CD4-positive, alpha-beta memory T cell (primary cell): ENCODE measurements at regions of chr6 and their contacts with region 1.

Region 1: GRCh38 chr6:41318654-41319565 is 16.5 kb upstream of the NCR2 start:
- DNase-seq: peak; percentile 76 to 82 (median 81)
- H3K4me3 ChIP-seq: peak overlapping the region in 1 of 2 donors; percentile 8
- H3K4me3 Mint-ChIP-seq: peak overlapping the region in 7 of 8 donors; percentile 12 to 72 (median 67)
- H3K27ac ChIP-seq: no peak overlapping the region
- H3K27ac Mint-ChIP-seq: peak overlapping the region in 3 of 7 donors; percentile 27 to 87 (median 71)
- H3K4me1 ChIP-seq: peaks cover 7% of the 10 kb centered on the region
- H3K4me1 Mint-ChIP-seq: peaks cover 2 to 19% (median 10%) of the 10 kb centered on the region in 4 donors
- H3K27me3 ChIP-seq: no peaks in the 10 kb centered on the region
- H3K27me3 Mint-ChIP-seq: peaks cover 5 to 14% of the 10 kb centered on the region in 2 donors

Region 2: GRCh38 chr6:41072676-41073623 is 246.0 kb before region 1 on chr6 and contains the start of gene NFYA:
- CTCF ChIA-PET with region 1: interaction called, 4 read pairs
- POLR2A ChIA-PET with region 1: no interaction called
- intact Hi-C with region 1: loop called (anchors 2 kb)
- DNase-seq: peak; percentile 100
- H3K4me3 ChIP-seq: peak within 1 kb of the TSS; percentile 59 to 94
- H3K4me3 Mint-ChIP-seq: peak within 1 kb of the TSS; percentile 92 to 98 (median 97)
- H3K27ac ChIP-seq: peak within 1 kb of the TSS; percentile 97
- H3K27ac Mint-ChIP-seq: peak within 1 kb of the TSS; percentile 90 to 99 (median 98)
- H3K4me1 ChIP-seq: peaks cover 47% of the 10 kb centered on the region
- H3K4me1 Mint-ChIP-seq: peaks cover 37 to 65% (median 49%) of the 10 kb centered on the region in 4 donors
- H3K27me3 ChIP-seq: no peaks in the 10 kb centered on the region
- H3K27me3 Mint-ChIP-seq: no peaks in the 10 kb centered on the region
- total RNA-seq, gene NFYA: 56.7 to 56.9 TPM

Region 3: DNA sequence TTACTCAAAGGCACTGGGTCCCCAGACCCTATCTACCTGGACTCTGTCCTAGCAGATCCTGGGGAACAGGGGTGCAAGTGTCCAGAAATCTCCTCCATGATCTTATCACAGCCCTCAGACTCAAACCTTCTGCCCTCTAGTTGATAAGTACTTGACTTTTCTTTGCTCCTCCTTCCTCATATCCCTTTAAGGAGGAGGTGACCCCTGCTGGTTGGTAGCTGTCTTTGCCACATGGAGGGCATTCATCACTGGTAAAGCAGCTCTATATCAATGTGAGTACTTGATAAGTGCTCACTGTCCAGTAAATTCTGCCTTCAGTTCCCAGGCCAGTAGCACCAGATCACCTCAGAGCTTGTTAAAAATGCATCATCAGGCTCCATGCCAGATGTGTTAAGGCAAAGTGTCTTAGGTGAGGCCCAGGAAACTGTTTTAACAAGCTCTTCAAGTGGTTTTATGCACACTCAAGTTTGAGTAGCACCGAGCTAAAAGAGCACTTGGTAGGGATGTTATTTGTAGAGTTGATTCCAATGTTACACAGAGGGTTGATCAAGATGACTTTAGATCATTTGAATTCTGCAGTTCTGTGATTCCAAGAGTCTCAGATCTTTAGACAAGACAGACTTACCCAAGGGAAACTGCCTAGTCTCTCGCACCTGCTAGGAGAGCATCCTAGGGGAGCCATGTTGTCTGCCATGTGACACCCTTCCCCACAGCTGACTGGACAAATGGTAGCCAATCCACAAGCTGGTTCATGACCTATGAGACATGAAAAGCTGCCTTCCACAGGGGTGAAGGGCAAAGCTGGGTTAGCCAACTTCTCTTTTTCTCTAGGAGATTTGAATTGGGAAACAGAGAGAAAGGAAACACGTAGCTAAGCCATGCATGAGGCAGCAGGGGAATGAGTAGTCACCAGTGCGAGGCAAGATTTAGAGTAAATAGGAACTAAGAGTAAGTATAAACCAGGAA is 136.6 kb before region 1 on chr6:
- CTCF ChIA-PET with region 1: interaction called, 10 read pairs
- POLR2A ChIA-PET with region 1: no interaction called
- intact Hi-C with region 1: no loop called
- DNase-seq: peak; percentile 47 to 65 (median 56)
- H3K4me3 ChIP-seq: no peak overlapping the region
- H3K4me3 Mint-ChIP-seq: no peak overlapping the region
- H3K27ac ChIP-seq: no peak overlapping the region
- H3K27ac Mint-ChIP-seq: peak overlapping the region in 1 of 7 donors; percentile 2
- H3K4me1 ChIP-seq: peaks cover 7% of the 10 kb centered on the region
- H3K4me1 Mint-ChIP-seq: peaks cover 7 to 14% (median 10%) of the 10 kb centered on the region in 4 donors
- H3K27me3 ChIP-seq: no peaks in the 10 kb centered on the region
- H3K27me3 Mint-ChIP-seq: peaks cover 3 to 6% of the 10 kb centered on the region in 2 donors

Region 4: GRCh38 chr6:41288030-41288753 is 30.7 kb before region 1 on chr6:
- CTCF ChIA-PET with region 1: no interaction called
- POLR2A ChIA-PET with region 1: no interaction called
- intact Hi-C with region 1: no loop called
- DNase-seq: no peak
- H3K4me3 ChIP-seq: no peak overlapping the region
- H3K4me3 Mint-ChIP-seq: no peak overlapping the region
- H3K27ac ChIP-seq: no peak overlapping the region
- H3K27ac Mint-ChIP-seq: no peak overlapping the region
- H3K4me1 ChIP-seq: no peaks in the 10 kb centered on the region
- H3K4me1 Mint-ChIP-seq: no peaks in the 10 kb centered on the region
- H3K27me3 ChIP-seq: no peaks in the 10 kb centered on the region
- H3K27me3 Mint-ChIP-seq: peaks cover 7 to 8% of the 10 kb centered on the region in 2 donors

Region 5: GRCh38 chr6:41298785-41299502 is 20.0 kb before region 1 on chr6:
- CTCF ChIA-PET with region 1: interaction called, 135 read pairs
- POLR2A ChIA-PET with region 1: no interaction called
- intact Hi-C with region 1: no loop called
- DNase-seq: peak in 4 of 5 donors; percentile 60 to 71 (median 68)
- H3K4me3 ChIP-seq: no peak overlapping the region
- H3K4me3 Mint-ChIP-seq: peak overlapping the region in 7 of 8 donors; percentile 34 to 76 (median 62)
- H3K27ac ChIP-seq: no peak overlapping the region
- H3K27ac Mint-ChIP-seq: peak overlapping the region; percentile 57 to 88 (median 74)
- H3K4me1 ChIP-seq: peaks cover 20% of the 10 kb centered on the region
- H3K4me1 Mint-ChIP-seq: peaks cover 27 to 43% (median 33%) of the 10 kb centered on the region in 4 donors
- H3K27me3 ChIP-seq: no peaks in the 10 kb centered on the region
- H3K27me3 Mint-ChIP-seq: peaks cover 0 to 8% of the 10 kb centered on the region in 2 donors

Region 6: DNA sequence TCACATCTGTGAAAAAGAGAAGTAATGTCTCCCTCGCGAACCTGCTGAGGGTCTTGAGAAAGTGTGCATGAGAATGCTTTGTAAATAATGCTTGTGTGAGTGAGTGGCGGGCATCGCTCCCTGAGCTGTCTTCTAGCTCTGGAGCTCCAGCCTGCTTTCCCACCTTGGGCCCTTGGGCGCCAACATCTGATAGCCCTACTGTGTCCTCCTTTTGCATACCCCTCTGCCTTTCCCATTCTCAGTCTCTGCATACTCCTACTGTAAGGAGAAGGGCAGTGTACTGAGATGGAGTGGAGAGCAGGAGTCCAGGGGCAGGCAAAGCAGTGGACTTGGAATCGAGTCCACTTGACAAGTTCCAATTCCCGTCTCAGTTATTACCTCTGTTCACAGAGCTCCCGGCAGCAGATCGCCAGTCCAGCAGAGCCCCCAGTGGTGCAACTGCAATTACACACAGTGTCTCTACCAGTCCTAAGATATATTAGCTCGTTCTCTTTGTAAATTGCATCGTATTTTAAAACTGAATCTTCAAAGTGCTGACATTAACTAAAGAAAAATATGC is 15.7 kb after region 1 on chr6:
- CTCF ChIA-PET with region 1: interaction called, 43 read pairs
- POLR2A ChIA-PET with region 1: interaction called, 3 read pairs
- intact Hi-C with region 1: no loop called
- DNase-seq: no peak
- H3K4me3 ChIP-seq: no peak overlapping the region
- H3K4me3 Mint-ChIP-seq: peak overlapping the region in 4 of 8 donors; percentile 11 to 67 (median 58)
- H3K27ac ChIP-seq: no peak overlapping the region
- H3K27ac Mint-ChIP-seq: peak overlapping the region; percentile 51 to 97 (median 89)
- H3K4me1 ChIP-seq: peaks cover 31% of the 10 kb centered on the region
- H3K4me1 Mint-ChIP-seq: peaks cover 8 to 38% (median 20%) of the 10 kb centered on the region in 4 donors
- H3K27me3 ChIP-seq: no peaks in the 10 kb centered on the region
- H3K27me3 Mint-ChIP-seq: peaks cover 0 to 2% of the 10 kb centered on the region in 2 donors